ENCODE measurements at regions of chr12 and their contacts with region 1.

Region 1: DNA sequence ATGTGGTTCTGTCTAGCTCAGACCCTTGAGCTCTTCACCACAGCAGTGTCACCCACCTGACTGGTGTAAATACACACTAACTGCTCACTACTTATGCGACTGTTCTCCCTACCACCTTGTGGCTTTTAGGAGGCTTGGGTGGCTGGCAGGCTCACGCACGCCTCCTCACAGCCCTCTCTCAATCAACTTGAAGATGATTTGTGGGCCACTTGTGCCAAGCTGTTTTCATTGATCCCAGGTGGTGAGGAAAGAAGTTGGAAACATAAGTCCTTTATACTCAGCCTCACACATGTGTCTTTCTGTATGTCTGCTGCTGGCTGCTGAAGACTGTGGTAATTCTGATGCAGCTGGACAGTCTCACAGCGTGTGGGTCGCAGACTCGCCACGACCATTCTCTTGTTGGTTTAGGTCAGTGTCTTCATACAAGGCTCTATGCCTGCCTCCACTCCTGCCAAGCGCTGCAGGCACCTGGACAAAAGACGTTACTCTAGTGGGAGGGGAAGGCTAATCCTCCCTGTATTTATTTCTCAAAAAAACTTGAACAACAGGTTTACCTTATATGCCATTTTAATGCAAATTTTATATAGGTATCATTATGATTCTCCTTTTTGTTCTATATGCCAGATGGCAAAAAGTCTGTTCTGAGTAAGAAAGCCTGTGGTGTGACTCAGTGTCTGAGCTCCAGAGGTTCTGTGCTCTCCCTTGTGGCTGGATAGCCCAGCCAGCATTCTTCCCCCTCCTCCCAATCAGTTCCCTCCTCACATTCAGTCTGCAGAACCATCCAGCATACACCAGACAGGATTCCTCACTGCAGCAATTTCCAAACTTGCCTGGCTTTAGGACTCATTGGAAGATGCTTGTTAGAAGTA is 115.6 kb downstream of the DIP2B start:
- DNase-seq: peak; percentile 88
- ATAC-seq: peak; percentile 91
- H3K4me3 ChIP-seq: peak overlapping the region; percentile 9; the same call in 1 of the 2 replicates
- H3K27ac ChIP-seq: peak overlapping the region; percentile 70
- H3K4me1 ChIP-seq: peaks cover 47% of the 10 kb centered on the region
- H3K27me3 ChIP-seq: no peaks in the 10 kb centered on the region
- CTCF ChIP-seq: 0 out of 2 replicates have a peak, but pooled peaks have one; percentile 23

Region 2: GRCh38 chr12:49403971-49404450 is 1216.3 kb before region 1 on chr12:
- CTCF ChIA-PET with region 1: no interaction called
- POLR2A ChIA-PET with region 1: no interaction called
- intact Hi-C with region 1: no loop called
- DNase-seq: no peak
- ATAC-seq: no peak
- H3K4me3 ChIP-seq: no peak overlapping the region
- H3K27ac ChIP-seq: no peak overlapping the region
- H3K4me1 ChIP-seq: peaks cover 14% of the 10 kb centered on the region
- H3K27me3 ChIP-seq: no peaks in the 10 kb centered on the region
- CTCF ChIP-seq: no peak

Region 3: DNA sequence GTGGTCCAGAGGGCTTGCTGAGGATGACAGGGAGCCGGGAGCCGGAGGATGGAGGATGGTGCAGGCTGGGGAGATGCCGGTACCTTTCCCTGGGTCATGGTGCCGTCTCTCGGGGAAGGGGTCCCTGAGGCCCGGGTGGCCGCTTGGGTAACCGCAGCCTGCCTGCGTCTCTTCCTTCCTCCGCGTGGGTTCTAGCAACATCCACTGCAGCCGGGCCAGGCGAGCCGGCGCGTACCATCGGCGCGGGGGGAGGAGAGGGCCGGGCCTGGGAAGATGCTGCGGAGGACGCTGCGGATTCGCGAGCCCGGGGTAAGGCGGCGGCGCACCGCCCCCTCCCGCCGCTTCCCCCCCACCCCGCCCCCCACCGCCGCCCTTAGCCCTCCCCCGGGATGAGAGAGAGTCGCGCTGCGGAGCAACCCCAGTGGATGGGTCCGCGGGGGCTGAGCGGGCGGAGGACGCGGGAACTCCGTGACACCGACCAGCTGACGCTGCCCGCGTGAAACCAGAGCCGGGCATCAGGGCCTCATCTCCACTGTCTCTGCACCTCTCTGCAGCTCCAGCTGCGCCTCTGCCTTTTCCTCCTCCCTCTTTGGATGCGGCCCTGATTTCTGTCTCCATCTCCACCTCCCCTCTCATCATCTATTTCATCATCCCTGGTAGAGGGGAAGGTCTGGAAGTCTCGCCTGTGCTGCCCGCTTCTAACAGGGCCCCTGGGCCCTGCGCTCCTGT is 716.5 kb before region 1 on chr12 and contains the start of gene FAIM2:
- CTCF ChIA-PET with region 1: no interaction called
- POLR2A ChIA-PET with region 1: no interaction called
- intact Hi-C with region 1: no loop called
- DNase-seq: no peak
- ATAC-seq: no peak
- H3K4me3 ChIP-seq: no peak within 1 kb of the TSS
- H3K27ac ChIP-seq: no peak within 1 kb of the TSS
- H3K4me1 ChIP-seq: no peaks in the 10 kb centered on the region
- H3K27me3 ChIP-seq: no peaks in the 10 kb centered on the region
- CTCF ChIP-seq: no peak
- total RNA-seq, gene FAIM2: 0.18 TPM in 1 of 2 replicates, not detected in the other

Region 4: DNA sequence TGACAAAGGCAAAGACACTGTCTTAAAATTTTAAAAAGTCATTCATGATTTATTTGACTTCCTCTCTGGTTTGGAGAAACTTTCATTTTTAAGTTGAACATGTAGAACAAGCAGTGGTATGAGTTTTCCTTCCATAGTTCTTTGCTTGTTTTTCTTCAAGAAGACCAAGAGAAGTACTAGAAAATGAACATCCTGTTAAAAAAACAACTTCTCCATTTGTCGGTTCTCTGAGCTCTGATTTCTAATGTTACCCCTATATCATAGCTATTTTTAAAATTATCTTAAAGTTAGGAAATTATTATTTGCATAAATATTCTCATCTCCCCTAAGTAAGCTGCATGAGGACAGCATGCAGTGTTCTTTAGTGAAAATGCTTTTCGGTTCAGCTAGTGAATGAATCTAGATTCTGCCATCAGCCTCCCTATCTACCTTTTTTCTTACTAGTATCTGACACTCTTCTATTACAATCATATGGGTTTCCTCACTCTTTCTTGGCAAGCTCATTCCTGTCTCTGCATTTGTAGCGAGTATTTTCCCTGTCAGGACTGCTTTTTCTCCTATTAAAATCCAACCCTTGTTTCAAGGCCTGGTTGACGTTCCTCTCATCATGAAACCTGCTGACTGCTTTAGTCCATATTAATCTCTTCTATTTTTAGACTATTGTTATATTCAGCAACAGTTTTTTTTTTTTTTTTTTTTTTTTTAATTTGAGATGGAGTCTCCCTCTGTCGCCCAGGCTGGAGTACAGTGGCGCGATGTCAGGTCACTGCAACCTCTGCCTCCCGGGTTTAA is 99.7 kb before region 1 on chr12:
- CTCF ChIA-PET with region 1: no interaction called
- POLR2A ChIA-PET with region 1: interaction called, 12 read pairs
- intact Hi-C with region 1: no loop called
- DNase-seq: no peak
- ATAC-seq: no peak
- H3K4me3 ChIP-seq: no peak overlapping the region
- H3K27ac ChIP-seq: no peak overlapping the region
- H3K4me1 ChIP-seq: peaks cover under 1% of the 10 kb centered on the region; the same call in 1 of the 2 replicates
- H3K27me3 ChIP-seq: no peaks in the 10 kb centered on the region
- CTCF ChIP-seq: no peak

Region 5: GRCh38 chr12:50661300-50662115 is 41.2 kb after region 1 on chr12:
- CTCF ChIA-PET with region 1: no interaction called
- POLR2A ChIA-PET with region 1: no interaction called
- intact Hi-C with region 1: no loop called
- DNase-seq: no peak
- ATAC-seq: no peak
- H3K4me3 ChIP-seq: no peak overlapping the region
- H3K27ac ChIP-seq: no peak overlapping the region
- H3K4me1 ChIP-seq: peaks cover 19% of the 10 kb centered on the region
- H3K27me3 ChIP-seq: no peaks in the 10 kb centered on the region
- CTCF ChIP-seq: no peak

Region 6: DNA sequence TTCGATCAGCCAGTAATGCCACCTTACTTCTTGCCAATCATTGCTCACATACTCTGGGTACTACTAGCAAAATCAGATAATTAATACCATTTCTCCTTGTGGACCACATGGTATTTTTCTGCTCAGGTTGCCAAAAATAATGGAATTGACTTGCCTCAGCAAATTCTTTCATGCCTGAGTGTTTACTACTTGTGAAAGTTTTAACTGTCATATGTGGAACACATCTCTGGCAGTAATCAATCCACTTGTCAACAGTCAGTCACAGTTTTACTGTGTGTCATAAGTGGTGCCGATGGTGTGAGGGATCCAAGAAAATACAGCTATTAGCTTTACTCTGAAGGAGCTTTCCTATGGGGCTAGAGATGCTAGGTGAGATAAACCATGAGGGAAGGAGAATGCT is 88.3 kb after region 1 on chr12:
- CTCF ChIA-PET with region 1: no interaction called
- POLR2A ChIA-PET with region 1: no interaction called
- intact Hi-C with region 1: no loop called
- DNase-seq: no peak
- ATAC-seq: no peak
- H3K4me3 ChIP-seq: no peak overlapping the region
- H3K27ac ChIP-seq: no peak overlapping the region
- H3K4me1 ChIP-seq: no peaks in the 10 kb centered on the region
- H3K27me3 ChIP-seq: no peaks in the 10 kb centered on the region
- CTCF ChIP-seq: no peak

Measured in PC-3 (cell line).